ENCODE measurements at regions of chr18 and their contacts with region 1.

Region 1: DNA sequence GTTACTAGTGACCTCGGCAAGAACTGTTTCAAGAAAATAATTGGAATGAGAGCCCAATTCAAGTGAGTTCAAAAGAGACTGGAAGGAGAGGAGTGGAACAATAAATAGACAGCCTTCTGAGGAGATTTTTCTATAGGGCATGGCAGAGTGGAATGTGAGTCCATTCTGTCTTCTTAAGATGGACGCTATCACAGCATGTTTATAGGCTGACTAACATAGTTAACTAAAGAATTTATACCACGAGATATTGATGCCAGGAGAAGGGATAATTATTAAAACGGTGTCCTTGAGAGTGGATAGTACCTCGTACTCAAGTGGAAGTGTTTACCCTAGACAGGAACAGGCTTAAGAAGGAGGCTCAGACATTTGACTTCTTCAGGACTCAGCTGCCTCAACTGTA is 143.5 kb upstream of the RBBP8 start:
- DNase-seq: no peak
- H3K4me3 ChIP-seq: no peak overlapping the region
- H3K27ac ChIP-seq: no peak overlapping the region
- H3K4me1 ChIP-seq: no peaks in the 10 kb centered on the region
- H3K27me3 ChIP-seq: peaks cover 28% of the 10 kb centered on the region
- CTCF ChIP-seq: no peak
- EP300 ChIP-seq: no peak
- RAD21 ChIP-seq: no peak

Region 2: DNA sequence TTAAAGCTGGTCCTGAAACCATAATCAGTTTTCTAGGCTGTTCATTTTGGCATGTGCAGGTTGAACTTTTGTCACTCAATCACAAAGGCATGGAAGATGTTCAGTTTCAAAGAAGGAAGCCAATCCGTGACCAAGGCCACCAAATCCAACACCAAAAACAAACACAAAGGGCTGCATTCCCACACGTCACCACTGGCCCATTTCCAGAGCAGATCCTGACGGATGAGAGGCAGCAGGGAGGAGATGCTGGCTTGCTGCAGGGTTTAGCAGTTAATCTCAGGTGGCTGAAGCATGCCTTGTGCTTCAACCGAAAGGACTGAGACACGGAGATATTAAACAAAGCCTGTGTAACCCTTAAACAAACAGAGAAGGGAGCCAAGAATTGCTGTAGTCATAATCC is 180.0 kb before region 1 on chr18:
- CTCF ChIA-PET with region 1: no interaction called
- POLR2A ChIA-PET with region 1: no interaction called
- DNase-seq: no peak
- H3K4me3 ChIP-seq: no peak overlapping the region
- H3K27ac ChIP-seq: no peak overlapping the region
- H3K4me1 ChIP-seq: no peaks in the 10 kb centered on the region
- H3K27me3 ChIP-seq: peaks cover 62% of the 10 kb centered on the region
- CTCF ChIP-seq: no peak
- EP300 ChIP-seq: no peak
- RAD21 ChIP-seq: no peak

Region 3: DNA sequence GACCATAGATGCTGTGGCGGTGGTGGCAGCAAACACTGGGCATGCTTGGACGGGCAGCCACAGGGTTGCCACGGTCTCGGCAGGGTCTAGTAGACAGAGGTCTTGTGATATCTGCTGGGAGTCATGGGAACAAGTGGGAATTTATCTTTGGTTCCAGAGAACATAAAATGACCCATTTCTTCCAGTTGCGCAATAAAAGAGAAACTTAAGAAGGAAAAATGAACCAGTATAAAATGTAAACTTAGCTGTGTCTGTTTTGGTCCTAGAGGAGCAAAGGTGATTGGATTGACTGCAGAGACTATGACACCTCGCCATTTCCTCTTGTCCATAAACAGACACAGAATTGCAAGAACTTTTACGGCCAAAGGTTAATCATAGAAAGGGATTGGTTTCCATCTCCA is 11.0 kb after region 1 on chr18:
- CTCF ChIA-PET with region 1: interaction called, 22 read pairs
- POLR2A ChIA-PET with region 1: no interaction called
- DNase-seq: no peak
- H3K4me3 ChIP-seq: no peak overlapping the region
- H3K27ac ChIP-seq: no peak overlapping the region
- H3K4me1 ChIP-seq: no peaks in the 10 kb centered on the region; a peak in 2 of 4 replicates
- H3K27me3 ChIP-seq: no peaks in the 10 kb centered on the region
- CTCF ChIP-seq: no peak
- EP300 ChIP-seq: no peak
- RAD21 ChIP-seq: no peak

Measured in SK-N-SH (cell line).